ENCODE measurements at regions of chr18 and their contacts with region 1.

Region 1: DNA sequence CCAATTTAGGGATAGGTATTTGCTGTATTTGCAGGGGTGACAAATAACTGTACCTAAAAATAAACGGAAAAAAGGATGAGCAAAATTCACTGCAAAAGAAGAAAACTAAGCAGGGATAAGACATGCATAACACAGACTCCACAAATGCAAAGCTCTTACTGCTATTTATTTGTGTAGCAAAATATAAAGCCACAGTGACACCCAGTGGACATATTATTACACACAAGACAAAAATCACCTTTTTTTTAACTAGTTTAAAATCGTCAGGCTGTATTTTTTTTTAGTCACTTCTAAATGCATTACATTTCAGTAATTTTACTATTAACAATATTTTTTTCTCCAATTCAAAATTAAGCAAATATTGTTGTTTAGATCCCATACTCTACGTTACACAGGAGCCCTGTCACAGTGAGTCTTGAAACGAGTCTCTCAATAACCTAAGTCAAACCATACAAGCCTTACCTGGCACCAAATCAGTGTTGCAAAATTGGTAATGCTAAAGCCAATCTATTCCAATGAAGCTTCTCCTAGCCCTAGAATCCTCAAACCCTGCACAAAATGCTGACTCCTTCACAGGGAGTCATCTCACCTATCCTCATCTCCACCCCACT is 23.7 kb downstream of the METTL4 start:
- DNase-seq: no peak
- ATAC-seq: no peak
- H3K4me3 Mint-ChIP-seq: no peak overlapping the region
- H3K27ac Mint-ChIP-seq: no peak overlapping the region
- H3K4me1 Mint-ChIP-seq: no peaks in the 10 kb centered on the region
- H3K27me3 Mint-ChIP-seq: no peaks in the 10 kb centered on the region
- CTCF ChIP-seq: no peak; the same call in 1 of the 2 replicates

Region 2: DNA sequence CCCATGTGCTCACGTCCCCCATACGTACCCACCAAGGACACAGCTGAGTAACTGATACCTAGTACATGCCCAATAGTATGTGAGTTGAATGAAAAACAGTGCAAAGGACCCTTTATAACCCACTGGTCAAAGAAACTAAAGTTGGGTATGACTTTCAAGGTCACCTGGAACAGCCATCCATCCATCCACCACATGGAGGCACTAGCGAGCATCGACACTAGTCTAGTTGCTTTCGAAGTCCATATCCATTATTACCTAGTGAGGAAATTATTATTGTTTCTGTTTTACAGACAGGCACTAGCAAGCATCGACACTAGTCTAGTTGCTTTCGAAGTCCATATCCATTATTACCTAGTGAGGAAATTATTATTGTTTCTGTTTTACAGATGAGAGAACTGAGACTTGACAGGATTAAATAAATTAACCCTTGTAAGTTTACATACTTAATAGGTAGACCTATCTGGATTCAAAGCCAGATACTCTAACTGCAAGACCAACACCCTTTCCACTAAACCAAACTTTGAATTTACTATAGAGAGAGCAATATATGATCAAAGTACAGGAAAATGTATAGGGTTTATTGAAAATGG is 209.9 kb before region 1 on chr18:
- CTCF ChIA-PET with region 1: interaction called, 18 read pairs
- POLR2A ChIA-PET with region 1: no interaction called
- DNase-seq: peak; percentile 66
- ATAC-seq: peak; percentile 69; the same call in 1 of the 2 replicates
- H3K4me3 Mint-ChIP-seq: no peak overlapping the region
- H3K27ac Mint-ChIP-seq: no peak overlapping the region
- H3K4me1 Mint-ChIP-seq: no peaks in the 10 kb centered on the region
- H3K27me3 Mint-ChIP-seq: no peaks in the 10 kb centered on the region
- CTCF ChIP-seq: peak; percentile 44; the same call in 1 of the 2 replicates

Region 3: DNA sequence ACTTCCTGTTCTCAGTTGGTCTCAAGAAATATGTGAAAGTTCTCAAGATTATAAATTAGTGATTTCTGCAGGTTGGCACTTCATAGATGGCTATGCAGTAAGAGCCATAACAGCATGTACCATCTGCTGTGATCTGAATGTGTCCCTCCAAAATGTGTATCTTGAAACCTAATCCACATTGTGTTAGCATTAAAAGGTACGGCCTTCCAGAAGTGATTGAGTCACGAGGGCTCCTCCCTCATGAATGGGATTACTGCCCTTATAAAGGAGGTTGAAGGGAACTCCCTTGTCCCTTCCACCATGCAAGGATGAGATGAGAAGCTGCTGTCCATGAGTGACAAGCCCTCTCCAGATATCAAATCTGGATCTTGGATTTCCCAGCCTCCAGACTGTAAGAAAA is 21.3 kb before region 1 on chr18:
- CTCF ChIA-PET with region 1: interaction called, 10 read pairs
- POLR2A ChIA-PET with region 1: no interaction called
- DNase-seq: no peak
- ATAC-seq: no peak
- H3K4me3 Mint-ChIP-seq: no peak overlapping the region
- H3K27ac Mint-ChIP-seq: no peak overlapping the region
- H3K4me1 Mint-ChIP-seq: peaks cover 4% of the 10 kb centered on the region; the same call in 1 of the 2 replicates
- H3K27me3 Mint-ChIP-seq: no peaks in the 10 kb centered on the region
- CTCF ChIP-seq: no peak